Activated T-helper 1 cell treated with anti-CD3 and anti-CD28 coated beads, Interleukin-12 subunit alpha, Interleukin-12 subunit beta, Interleukin-2, Interleukin-4 antibody, amounts not matched to agents 30 ng/mL and 10 ng/mL and 1 ng/mL, durations not matched to agents 14 hours and 24 hours and 36 hours (primary cell): ENCODE measurements at regions of chr2 and their contacts with region 1.

Region 1: DNA sequence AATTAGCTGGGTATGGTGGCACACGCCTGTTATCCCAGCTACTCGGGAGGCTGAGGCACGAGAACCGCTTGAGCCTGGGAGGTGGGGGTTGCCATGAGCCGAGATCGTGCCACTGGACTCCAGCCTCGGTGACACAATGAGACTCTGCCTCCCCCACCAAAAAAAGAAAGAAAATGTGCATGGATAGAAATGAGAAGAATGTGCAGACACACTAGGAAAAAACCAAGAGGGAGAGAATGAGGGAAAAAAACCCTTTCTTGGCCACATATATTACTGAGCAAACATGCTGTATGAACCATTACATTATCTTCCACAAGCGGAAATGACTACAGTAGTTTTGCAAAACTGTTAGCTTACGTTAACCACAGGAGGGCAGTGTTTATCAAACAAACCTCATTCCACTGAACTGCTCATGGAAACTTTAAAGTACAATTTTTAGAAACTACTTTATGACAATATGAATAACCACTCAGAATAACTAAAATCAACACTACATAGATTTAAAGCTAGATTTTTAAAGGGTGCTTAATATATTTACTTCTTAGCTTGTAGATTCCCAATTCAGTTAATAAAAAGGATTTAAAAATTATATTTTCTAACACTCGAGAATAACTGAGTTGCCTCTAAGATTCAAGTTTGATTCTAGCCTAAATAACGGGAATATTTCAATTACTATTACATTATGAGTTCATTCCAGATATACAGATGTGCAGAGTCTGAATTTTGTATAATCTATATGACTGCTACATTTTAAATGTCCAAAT is 26.4 kb downstream of the ASXL2 start:
- DNase-seq: peak; percentile 44
- H3K4me3 Mint-ChIP-seq: peak overlapping the region; percentile 43
- H3K27ac Mint-ChIP-seq: peak overlapping the region; percentile 84
- H3K4me1 Mint-ChIP-seq: peaks cover 37% of the 10 kb centered on the region
- H3K27me3 Mint-ChIP-seq: no peaks in the 10 kb centered on the region

Region 2: DNA sequence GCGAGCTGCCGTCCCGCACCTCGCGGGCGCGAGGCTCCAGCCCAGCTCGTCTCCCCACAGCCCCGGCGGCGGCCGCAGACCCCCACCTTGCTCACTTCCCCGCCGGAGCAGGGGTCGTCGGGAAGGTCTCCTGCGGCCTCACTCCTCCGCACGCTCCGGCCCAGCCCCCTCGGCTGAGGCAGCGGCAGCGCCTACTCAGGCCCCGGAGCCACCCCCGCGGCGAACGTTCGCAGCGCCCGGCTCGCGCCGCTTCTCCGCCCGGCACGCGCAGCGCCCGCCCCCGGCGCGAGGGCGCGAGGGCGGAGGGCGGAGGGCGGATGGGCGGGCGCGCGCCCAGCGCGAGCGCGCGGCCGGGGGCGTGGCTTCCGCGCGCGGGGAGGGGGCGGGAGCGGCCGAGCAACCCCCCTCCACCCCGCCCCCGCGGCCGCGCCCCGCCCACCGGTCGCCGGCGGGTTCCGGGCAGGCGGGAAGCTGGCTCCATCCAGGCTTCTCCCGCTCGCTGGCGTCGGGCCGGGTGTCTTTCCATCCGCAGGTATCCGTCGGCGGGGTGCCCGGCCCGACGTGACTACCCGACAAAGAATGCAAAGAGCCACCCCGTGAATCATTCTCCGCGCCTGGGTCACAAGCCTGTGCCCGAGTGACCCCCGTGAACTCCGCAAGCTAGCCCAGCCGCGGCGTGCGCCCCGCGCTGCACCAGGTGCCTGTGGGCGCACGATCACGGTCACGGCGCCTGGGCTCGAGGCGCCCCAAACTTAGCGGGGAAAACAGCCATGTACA is 178.4 kb before region 1 on chr2 and contains the start of gene DTNB:
- intact Hi-C with region 1: loop called (anchors 2 kb)
- DNase-seq: peak; percentile 75
- H3K4me3 Mint-ChIP-seq: peak within 1 kb of the TSS; percentile 83
- H3K27ac Mint-ChIP-seq: peak within 1 kb of the TSS; percentile 82
- H3K4me1 Mint-ChIP-seq: peaks cover 38% of the 10 kb centered on the region
- H3K27me3 Mint-ChIP-seq: peaks cover 26% of the 10 kb centered on the region
- total RNA-seq, gene DTNB: 28.8 and 28.9 TPM in 2 replicates

Region 3: GRCh38 chr2:25817630-25818029 is 34.3 kb before region 1 on chr2:
- intact Hi-C with region 1: loop called (anchors 1 kb)
- DNase-seq: no peak
- H3K4me3 Mint-ChIP-seq: no peak overlapping the region
- H3K27ac Mint-ChIP-seq: peak overlapping the region; percentile 59
- H3K4me1 Mint-ChIP-seq: peaks cover 60% of the 10 kb centered on the region
- H3K27me3 Mint-ChIP-seq: peaks cover 2% of the 10 kb centered on the region

Region 4: DNA sequence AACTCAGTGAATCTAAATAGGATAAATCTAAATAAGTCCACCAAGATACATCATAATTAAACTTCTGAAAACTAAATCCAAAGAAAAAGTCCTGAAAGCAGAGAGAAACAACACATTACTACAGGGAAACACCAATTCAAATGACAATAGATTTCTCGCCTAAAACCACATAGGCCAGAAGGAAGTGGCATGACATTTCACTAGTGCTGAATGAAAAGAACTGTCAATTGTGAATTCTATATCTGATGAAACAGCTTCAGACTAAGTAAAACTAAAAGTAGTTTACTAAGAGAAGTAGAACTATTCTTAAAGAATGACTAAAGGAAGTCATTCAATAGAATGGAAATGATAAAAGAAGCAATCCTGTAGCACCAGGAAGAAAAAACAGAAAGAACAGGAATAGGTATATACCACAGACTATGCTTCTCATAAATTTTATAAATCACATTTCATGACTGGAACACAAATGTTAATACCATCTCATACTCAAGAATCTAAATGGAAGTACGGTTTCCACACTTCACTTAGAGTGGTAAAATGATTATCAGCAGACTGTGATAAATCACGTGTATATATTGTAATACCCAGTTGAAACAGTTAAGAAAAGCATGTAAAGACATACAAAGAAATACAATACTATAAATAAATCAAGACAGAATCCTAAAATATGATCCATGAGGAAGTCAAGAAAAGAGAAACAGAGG is 20.0 kb before region 1 on chr2:
- intact Hi-C with region 1: loop called (anchors 1 kb)
- DNase-seq: no peak
- H3K4me3 Mint-ChIP-seq: peak overlapping the region; percentile 63
- H3K27ac Mint-ChIP-seq: peak overlapping the region; percentile 90
- H3K4me1 Mint-ChIP-seq: peaks cover 49% of the 10 kb centered on the region
- H3K27me3 Mint-ChIP-seq: no peaks in the 10 kb centered on the region

Region 5: GRCh38 chr2:25982273-25982967 is 130.5 kb after region 1 on chr2 and contains the start of gene KIF3C:
- intact Hi-C with region 1: loop called (anchors 2 kb)
- DNase-seq: peak; percentile 73
- H3K4me3 Mint-ChIP-seq: peak within 1 kb of the TSS; percentile 89
- H3K27ac Mint-ChIP-seq: peak within 1 kb of the TSS; percentile 53
- H3K4me1 Mint-ChIP-seq: peaks cover 17% of the 10 kb centered on the region
- H3K27me3 Mint-ChIP-seq: no peaks in the 10 kb centered on the region
- total RNA-seq, gene KIF3C: 5.3 and 6.2 TPM in 2 replicates

Region 6: GRCh38 chr2:26968001-26968400 is 1116.1 kb after region 1 on chr2:
- intact Hi-C with region 1: no loop called
- DNase-seq: no peak
- H3K4me3 Mint-ChIP-seq: no peak overlapping the region
- H3K27ac Mint-ChIP-seq: no peak overlapping the region
- H3K4me1 Mint-ChIP-seq: peaks cover 17% of the 10 kb centered on the region
- H3K27me3 Mint-ChIP-seq: peaks cover 41% of the 10 kb centered on the region